ENCODE measurements at regions of chr17 and their contacts with region 1.

Region 1: GRCh38 chr17:57486873-57487301 is 230.6 kb downstream of the MSI2 start:
- DNase-seq: no peak
- H3K4me3 ChIP-seq: no peak overlapping the region
- CTCF ChIP-seq: no peak

Region 2: GRCh38 chr17:57282296-57282695 is 204.6 kb before region 1 on chr17:
- in situ Hi-C with region 1: no loop called
- DNase-seq: no peak
- H3K4me3 ChIP-seq: no peak overlapping the region
- CTCF ChIP-seq: no peak

Region 3: GRCh38 chr17:57451191-57451590 is 35.7 kb before region 1 on chr17:
- in situ Hi-C with region 1: loop called (anchors 5 kb)
- DNase-seq: no peak
- H3K4me3 ChIP-seq: no peak overlapping the region
- CTCF ChIP-seq: no peak